A549 (cell line): ENCODE measurements at regions of chr14 and their contacts with region 1.

Region 1: DNA sequence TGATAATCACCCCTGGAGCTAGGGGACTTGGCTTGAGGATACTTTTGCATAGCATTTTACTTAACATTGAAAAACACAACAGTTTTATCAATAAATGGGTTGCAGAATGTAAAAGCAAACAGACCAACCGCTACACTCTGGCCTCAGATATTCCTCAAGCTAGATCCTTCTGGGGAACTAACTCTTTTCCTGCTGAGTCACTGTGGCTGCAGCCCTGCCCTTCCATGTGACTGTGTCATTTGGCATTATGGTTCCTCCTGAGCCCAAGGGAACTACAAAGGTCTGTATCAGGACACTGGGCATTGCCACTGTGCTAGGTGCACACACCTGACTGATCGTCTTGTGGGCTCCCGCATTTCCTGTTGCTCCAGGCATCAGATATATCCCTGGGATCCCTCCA is 56.6 kb downstream of the TTC9 start:
- DNase-seq: peak; percentile 21 to 56
- ATAC-seq: peak; percentile 53 to 76; a peak in 4 of 6 replicates
- H3K4me3 ChIP-seq: no peak overlapping the region
- H3K27ac ChIP-seq: peak overlapping the region; percentile 65 to 81
- H3K4me1 ChIP-seq: peaks cover 16% of the 10 kb centered on the region
- CTCF ChIP-seq: no peak
- EP300 ChIP-seq: no peak
- POLR2A ChIP-seq: no peak
- RAD21 ChIP-seq: no peak

Region 2: DNA sequence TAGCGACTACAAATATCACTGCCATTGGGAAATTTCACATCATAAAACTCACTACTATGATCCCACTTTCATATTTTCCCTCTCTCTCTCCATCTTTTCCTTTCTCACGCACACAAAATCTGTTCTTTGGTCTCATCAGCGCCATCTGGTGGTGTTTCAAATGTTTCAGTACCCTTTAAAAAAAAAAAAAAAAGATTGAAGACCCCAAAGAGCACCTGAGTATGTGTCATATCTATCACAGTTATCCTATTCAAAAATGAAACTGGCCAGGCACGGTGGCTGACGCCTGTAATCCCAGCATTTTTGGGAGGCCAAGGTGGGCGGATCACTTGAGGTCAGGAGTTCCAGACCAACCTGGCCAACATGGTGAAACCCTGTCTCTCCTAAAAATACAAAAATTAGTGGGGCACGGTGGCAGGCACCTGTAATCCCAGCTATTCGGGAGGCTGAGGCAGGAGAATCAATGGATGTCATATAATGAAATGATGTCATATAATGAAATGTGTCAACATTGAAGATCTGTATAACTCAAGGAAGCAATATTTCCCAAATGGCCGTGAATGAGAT is 15.8 kb after region 1 on chr14:
- CTCF ChIA-PET with region 1: interaction called, 17 read pairs
- POLR2A ChIA-PET with region 1: no interaction called
- DNase-seq: peak; percentile 58 to 70
- ATAC-seq: peak in 1 of 2 experiments; percentile 59; a peak in 3 of 6 replicates
- H3K4me3 ChIP-seq: no peak overlapping the region
- H3K27ac ChIP-seq: peak overlapping the region; percentile 11 to 61; a peak in 3 of 6 replicates
- H3K4me1 ChIP-seq: peaks cover 36% of the 10 kb centered on the region
- CTCF ChIP-seq: peak; percentile 77
- EP300 ChIP-seq: no peak
- POLR2A ChIP-seq: no peak
- RAD21 ChIP-seq: peak; percentile 55 to 67